ENCODE measurements at regions of chr7 and their contacts with region 1.

Region 1: DNA sequence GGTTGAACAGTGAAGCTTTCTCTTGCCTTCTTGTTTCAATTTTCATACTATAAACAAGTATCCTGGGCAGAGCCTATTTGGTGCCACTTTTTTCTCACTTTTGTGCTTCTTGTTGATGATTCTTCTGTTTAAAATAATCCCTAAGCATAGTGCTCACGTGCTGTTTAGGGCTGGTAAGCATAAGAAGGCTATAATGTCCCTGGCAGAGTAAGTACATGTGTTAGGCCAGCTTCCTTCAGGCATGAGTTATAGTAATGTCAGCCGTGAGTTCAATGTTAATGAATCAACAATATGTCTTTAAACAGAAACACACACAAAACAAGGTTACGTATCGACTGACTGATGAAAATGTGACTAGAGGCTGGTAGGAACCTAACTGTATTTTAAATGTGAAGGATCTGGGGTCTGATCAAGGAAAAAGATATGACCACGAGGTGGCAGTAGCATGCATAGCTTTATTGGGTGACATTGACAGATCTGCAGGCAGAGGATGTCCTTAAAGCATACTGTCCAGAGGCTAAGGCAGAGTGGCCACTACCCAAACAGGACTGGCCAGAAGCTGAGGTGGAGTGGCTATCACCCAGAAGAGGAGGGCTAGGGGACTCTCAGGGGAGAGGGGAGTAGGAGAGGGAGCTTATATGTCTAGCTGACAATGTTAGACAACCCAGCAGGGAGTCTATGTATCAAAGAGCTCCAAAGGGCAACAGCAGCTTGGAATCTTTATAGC is 113.7 kb downstream of the BRAF start:
- DNase-seq: peak; percentile 71
- ATAC-seq: peak; percentile 97
- H3K4me3 ChIP-seq: no peak overlapping the region
- H3K27ac ChIP-seq: no peak overlapping the region
- H3K4me1 ChIP-seq: no peaks in the 10 kb centered on the region
- H3K27me3 ChIP-seq: no peaks in the 10 kb centered on the region
- CTCF ChIP-seq: peak; percentile 83

Region 2: GRCh38 chr7:140349144-140349771 is 461.7 kb before region 1 on chr7:
- CTCF ChIA-PET with region 1: no interaction called
- POLR2A ChIA-PET with region 1: no interaction called
- in situ Hi-C with region 1: no loop called
- intact Hi-C with region 1: no loop called
- DNase-seq: no peak
- ATAC-seq: no peak
- H3K4me3 ChIP-seq: no peak overlapping the region
- H3K27ac ChIP-seq: no peak overlapping the region
- H3K4me1 ChIP-seq: no peaks in the 10 kb centered on the region
- H3K27me3 ChIP-seq: no peaks in the 10 kb centered on the region
- CTCF ChIP-seq: no peak

Region 3: GRCh38 chr7:140924019-140924820 is 113.2 kb after region 1 on chr7:
- CTCF ChIA-PET with region 1: interaction called, 11 read pairs
- POLR2A ChIA-PET with region 1: no interaction called
- in situ Hi-C with region 1: no loop called
- intact Hi-C with region 1: loop called (anchors 5 kb)
- DNase-seq: no peak
- ATAC-seq: peak; percentile 92
- H3K4me3 ChIP-seq: peak overlapping the region; percentile 83 to 98
- H3K27ac ChIP-seq: peak overlapping the region; percentile 90
- H3K4me1 ChIP-seq: peaks cover 5% of the 10 kb centered on the region; the same call in 1 of the 2 replicates
- H3K27me3 ChIP-seq: no peaks in the 10 kb centered on the region
- CTCF ChIP-seq: peak; percentile 77

Region 4: GRCh38 chr7:140983802-140984201 is 172.8 kb after region 1 on chr7:
- CTCF ChIA-PET with region 1: interaction called, 19 read pairs
- POLR2A ChIA-PET with region 1: no interaction called
- in situ Hi-C with region 1: no loop called
- intact Hi-C with region 1: loop called (anchors 2 kb)
- DNase-seq: no peak
- ATAC-seq: no peak
- H3K4me3 ChIP-seq: no peak overlapping the region
- H3K27ac ChIP-seq: no peak overlapping the region
- H3K4me1 ChIP-seq: no peaks in the 10 kb centered on the region
- H3K27me3 ChIP-seq: no peaks in the 10 kb centered on the region
- CTCF ChIP-seq: peak; percentile 66

Region 5: GRCh38 chr7:141014524-141015395 is 203.8 kb after region 1 on chr7 and contains the start of gene MRPS33:
- CTCF ChIA-PET with region 1: interaction called, 7 read pairs
- POLR2A ChIA-PET with region 1: no interaction called
- in situ Hi-C with region 1: no loop called
- intact Hi-C with region 1: loop called (anchors 5 kb)
- DNase-seq: peak; percentile 90
- ATAC-seq: peak; percentile 100
- H3K4me3 ChIP-seq: peak within 1 kb of the TSS; percentile 93 to 95
- H3K27ac ChIP-seq: peak within 1 kb of the TSS; percentile 97
- H3K4me1 ChIP-seq: peaks cover 6% of the 10 kb centered on the region
- H3K27me3 ChIP-seq: peaks cover 9% of the 10 kb centered on the region; the same call in 1 of the 2 replicates
- CTCF ChIP-seq: peak; percentile 92
- total RNA-seq, gene MRPS33: 68.8 TPM

Measured in Panc1 (cell line).